Activated CD4-positive, alpha-beta T cell treated with anti-CD3 and anti-CD28 coated beads, Interleukin-2, amount 10 ng/mL, durations not matched to agents 24 days and 14 days (primary cell): ENCODE measurements at regions of chr9 and their contacts with region 1.

Region 1: GRCh38 chr9:15295761-15296405 is 11.1 kb downstream of the TTC39B start:
- DNase-seq: peak; percentile 81
- H3K4me3 Mint-ChIP-seq: peak overlapping the region; percentile 72
- H3K27ac Mint-ChIP-seq: peak overlapping the region; percentile 97
- H3K4me1 Mint-ChIP-seq: peaks cover 82% of the 10 kb centered on the region
- H3K27me3 Mint-ChIP-seq: no peaks in the 10 kb centered on the region

Region 2: GRCh38 chr9:15231788-15232635 is 63.9 kb before region 1 on chr9:
- intact Hi-C with region 1: loop called (anchors 1 kb)
- DNase-seq: no peak
- H3K4me3 Mint-ChIP-seq: no peak overlapping the region
- H3K27ac Mint-ChIP-seq: no peak overlapping the region
- H3K4me1 Mint-ChIP-seq: peaks cover 27% of the 10 kb centered on the region
- H3K27me3 Mint-ChIP-seq: no peaks in the 10 kb centered on the region

Region 3: GRCh38 chr9:15306757-15307534 is 11.1 kb after region 1 on chr9 and contains the start of gene TTC39B:
- intact Hi-C with region 1: loop called (anchors 1 kb)
- DNase-seq: peak; percentile 96
- H3K4me3 Mint-ChIP-seq: peak within 1 kb of the TSS; percentile 99
- H3K27ac Mint-ChIP-seq: peak within 1 kb of the TSS; percentile 97
- H3K4me1 Mint-ChIP-seq: peaks cover 51% of the 10 kb centered on the region
- H3K27me3 Mint-ChIP-seq: no peaks in the 10 kb centered on the region
- total RNA-seq, gene TTC39B: 20.3 and 22.2 TPM in 2 replicates

Region 4: GRCh38 chr9:15510789-15511575 is 215.1 kb after region 1 on chr9 and contains the start of gene PSIP1:
- intact Hi-C with region 1: loop called (anchors 1 kb)
- DNase-seq: peak; percentile 96
- H3K4me3 Mint-ChIP-seq: peak within 1 kb of the TSS; percentile 87
- H3K27ac Mint-ChIP-seq: peak within 1 kb of the TSS; percentile 100
- H3K4me1 Mint-ChIP-seq: peaks cover 41% of the 10 kb centered on the region
- H3K27me3 Mint-ChIP-seq: peaks cover 3% of the 10 kb centered on the region
- total RNA-seq, gene PSIP1: 106 TPM in 2 replicates